OCI-LY7 (cell line): ENCODE measurements at regions of chr18 and their contacts with region 1.

Region 1: GRCh38 chr18:7601246-7601615 is 34.1 kb downstream of the PTPRM start:
- DNase-seq: no peak
- H3K4me3 ChIP-seq: no peak overlapping the region
- H3K27ac ChIP-seq: no peak overlapping the region
- H3K4me1 ChIP-seq: no peaks in the 10 kb centered on the region
- CTCF ChIP-seq: no peak

Region 2: GRCh38 chr18:7666195-7666776 is 65.1 kb after region 1 on chr18:
- CTCF ChIA-PET with region 1: no interaction called
- POLR2A ChIA-PET with region 1: no interaction called
- intact Hi-C with region 1: loop called (anchors 10 kb)
- DNase-seq: no peak
- H3K4me3 ChIP-seq: no peak overlapping the region
- H3K27ac ChIP-seq: no peak overlapping the region
- H3K4me1 ChIP-seq: no peaks in the 10 kb centered on the region
- CTCF ChIP-seq: no peak